ENCODE measurements at regions of chr13 and their contacts with region 1.

Region 1: DNA sequence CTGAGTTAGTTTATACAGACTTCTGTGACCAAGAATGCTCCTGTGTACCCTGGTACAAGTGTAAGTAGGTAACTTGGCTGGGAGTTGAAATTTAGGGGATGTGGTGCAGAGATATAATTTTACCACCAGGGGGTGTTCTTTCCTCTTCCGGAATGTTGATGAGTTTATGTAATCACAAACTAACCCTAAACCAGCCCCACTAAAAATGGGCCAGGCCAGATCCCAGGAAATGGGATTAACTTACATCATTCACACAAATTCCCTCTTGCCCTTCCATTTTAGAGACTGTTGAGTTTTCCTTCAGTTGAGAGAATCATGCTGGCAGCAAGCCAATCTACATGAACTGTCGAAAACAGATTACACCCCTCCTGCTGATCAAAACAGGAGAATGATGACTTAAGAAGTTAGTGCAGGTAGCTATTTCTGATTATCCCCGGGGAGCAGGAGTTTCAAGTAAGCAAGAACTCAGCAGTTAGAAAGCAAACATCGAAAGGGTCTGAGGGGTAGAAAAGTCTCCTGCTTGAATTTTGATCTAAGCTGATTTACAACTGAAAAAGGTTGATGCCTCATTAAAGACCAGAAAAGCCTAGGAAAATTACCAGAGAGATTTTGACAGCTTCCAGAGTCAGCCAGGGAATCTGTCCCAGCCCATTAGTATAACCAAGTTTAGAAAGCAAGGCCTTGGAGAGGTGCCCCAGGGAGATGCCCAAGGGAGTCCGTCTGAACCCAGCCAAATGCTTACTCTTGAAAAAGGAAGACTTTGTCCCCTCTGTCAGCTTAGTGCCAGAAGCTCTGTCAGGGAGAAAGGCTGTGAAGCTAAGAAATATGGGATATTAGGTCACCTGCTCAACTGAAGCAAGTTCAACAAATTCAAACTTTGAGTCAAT is 32.3 kb upstream of the MED4 start:
- DNase-seq: peak in 8 of 9 donors; percentile 20 to 84 (median 80)
- ATAC-seq: peak; percentile 96
- H3K4me3 ChIP-seq: no peak overlapping the region
- H3K4me3 Mint-ChIP-seq: peak overlapping the region in 9 of 10 donors; percentile 25 to 69 (median 52)
- H3K27ac ChIP-seq: peak overlapping the region; percentile 54
- H3K27ac Mint-ChIP-seq: peak overlapping the region in 8 of 9 donors; percentile 83 to 95 (median 89)
- H3K4me1 ChIP-seq: peaks cover 5 to 15% of the 10 kb centered on the region in 2 donors
- H3K4me1 Mint-ChIP-seq: peaks cover 14 to 42% (median 35%) of the 10 kb centered on the region in 7 donors
- H3K27me3 ChIP-seq: no peaks in the 10 kb centered on the region
- H3K27me3 Mint-ChIP-seq: peaks cover 0 to 3% (median 0%) of the 10 kb centered on the region in 5 donors

Region 2: GRCh38 chr13:48086272-48086671 is 40.9 kb before region 1 on chr13:
- CTCF ChIA-PET with region 1: no interaction called
- POLR2A ChIA-PET with region 1: no interaction called
- intact Hi-C with region 1: no loop called
- DNase-seq: no peak
- ATAC-seq: no peak
- H3K4me3 ChIP-seq: no peak overlapping the region
- H3K4me3 Mint-ChIP-seq: no peak overlapping the region
- H3K27ac ChIP-seq: no peak overlapping the region
- H3K27ac Mint-ChIP-seq: no peak overlapping the region
- H3K4me1 ChIP-seq: peaks cover 4 to 5% of the 10 kb centered on the region in 2 donors
- H3K4me1 Mint-ChIP-seq: peaks cover 3 to 26% (median 23%) of the 10 kb centered on the region in 7 donors
- H3K27me3 ChIP-seq: no peaks in the 10 kb centered on the region
- H3K27me3 Mint-ChIP-seq: no peaks in the 10 kb centered on the region

Region 3: GRCh38 chr13:48144413-48145035 is 17.3 kb after region 1 on chr13:
- CTCF ChIA-PET with region 1: interaction called, 4 read pairs
- POLR2A ChIA-PET with region 1: interaction called, 13 read pairs
- intact Hi-C with region 1: loop called in 1 of 2 experiments (anchors 1 kb)
- DNase-seq: peak in 4 of 9 donors; percentile 27 to 50 (median 30)
- ATAC-seq: peak; percentile 85
- H3K4me3 ChIP-seq: no peak overlapping the region
- H3K4me3 Mint-ChIP-seq: peak overlapping the region in 6 of 10 donors; percentile 9 to 56 (median 28)
- H3K27ac ChIP-seq: peak overlapping the region; percentile 52
- H3K27ac Mint-ChIP-seq: peak overlapping the region in 8 of 9 donors; percentile 56 to 97 (median 92)
- H3K4me1 ChIP-seq: peaks cover 5 to 9% of the 10 kb centered on the region in 2 donors
- H3K4me1 Mint-ChIP-seq: peaks cover 9 to 49% (median 36%) of the 10 kb centered on the region in 7 donors
- H3K27me3 ChIP-seq: no peaks in the 10 kb centered on the region
- H3K27me3 Mint-ChIP-seq: peaks cover 0 to 3% (median 0%) of the 10 kb centered on the region in 5 donors

Region 4: DNA sequence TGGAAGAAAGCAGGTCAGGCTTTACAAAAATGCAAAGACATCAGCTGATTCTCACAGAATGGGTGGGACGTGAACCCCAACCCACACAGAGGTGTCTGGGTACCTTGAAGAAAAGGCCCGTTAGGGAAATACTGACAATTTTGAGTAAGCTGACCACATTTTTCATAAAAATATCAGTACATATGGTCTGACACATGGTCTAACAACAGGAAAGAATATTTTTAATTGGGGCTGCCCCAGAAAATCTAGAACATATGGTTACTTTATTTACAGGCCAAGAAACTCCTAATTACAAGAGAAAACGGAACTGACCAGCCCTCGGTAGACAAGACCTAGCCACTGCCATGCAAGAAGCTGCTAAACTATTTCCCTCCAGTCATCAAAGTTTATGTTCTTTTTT is 57.1 kb after region 1 on chr13:
- CTCF ChIA-PET with region 1: interaction called, 10 read pairs
- POLR2A ChIA-PET with region 1: interaction called, 18 read pairs
- intact Hi-C with region 1: loop called (anchors 1 kb)
- DNase-seq: no peak
- ATAC-seq: no peak
- H3K4me3 ChIP-seq: no peak overlapping the region
- H3K4me3 Mint-ChIP-seq: peak overlapping the region in 9 of 10 donors; percentile 41 to 79 (median 65)
- H3K27ac ChIP-seq: peak overlapping the region; percentile 42
- H3K27ac Mint-ChIP-seq: peak overlapping the region in 8 of 9 donors; percentile 82 to 97 (median 90)
- H3K4me1 ChIP-seq: peaks cover 8 to 58% of the 10 kb centered on the region in 2 donors
- H3K4me1 Mint-ChIP-seq: peaks cover 40 to 81% (median 64%) of the 10 kb centered on the region in 7 donors
- H3K27me3 ChIP-seq: no peaks in the 10 kb centered on the region
- H3K27me3 Mint-ChIP-seq: peaks cover 0 to 10% (median 0%) of the 10 kb centered on the region in 5 donors

Region 5: DNA sequence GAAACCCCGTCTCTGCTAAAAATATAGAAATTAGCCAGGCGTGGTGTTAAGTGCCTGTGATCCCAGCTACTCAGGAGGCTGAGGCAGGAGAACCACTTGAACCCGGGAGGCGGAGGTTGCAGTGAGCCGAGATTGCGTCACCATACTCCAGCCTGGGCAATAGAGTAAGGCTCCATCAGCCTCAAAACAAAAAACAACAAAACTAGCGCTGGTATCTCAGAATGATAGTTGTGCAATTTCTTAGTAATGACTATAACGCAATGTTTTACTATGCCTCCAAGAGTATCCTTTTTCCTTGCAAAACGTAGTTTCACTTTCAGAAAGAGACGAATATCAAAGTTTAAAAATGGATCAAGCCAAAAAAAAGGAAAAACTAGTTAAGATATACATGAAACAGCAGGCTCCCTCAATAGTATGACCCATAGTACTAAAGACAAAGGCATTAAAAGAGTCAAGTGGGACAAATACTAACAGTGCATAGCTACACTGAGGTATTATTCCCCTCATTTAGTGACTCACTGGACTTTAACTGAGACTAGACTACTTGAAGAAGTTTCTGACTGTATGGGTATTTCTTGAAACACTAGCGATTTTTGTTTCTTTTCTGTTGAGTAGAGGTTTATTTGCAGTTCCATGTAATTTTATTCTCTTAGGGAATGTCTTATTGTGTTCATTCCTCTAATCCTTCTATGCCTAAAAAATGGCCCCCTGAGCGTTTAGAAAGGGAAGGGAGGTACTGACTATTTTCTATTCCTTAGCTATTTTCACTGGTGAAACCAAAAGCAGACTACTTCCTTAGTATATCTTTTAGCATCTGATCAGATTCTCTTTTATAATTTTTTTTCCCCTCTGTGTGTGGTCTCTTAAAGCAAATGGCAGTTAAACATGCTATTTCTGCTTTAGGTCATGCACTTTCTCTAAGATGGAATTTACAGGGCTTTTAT is 95.4 kb after region 1 on chr13:
- CTCF ChIA-PET with region 1: interaction called, 10 read pairs
- POLR2A ChIA-PET with region 1: interaction called, 19 read pairs
- intact Hi-C with region 1: loop called in 1 of 2 experiments (anchors 1 kb)
- DNase-seq: peak in 2 of 9 donors; percentile 25 to 30
- ATAC-seq: peak; percentile 58
- H3K4me3 ChIP-seq: peak overlapping the region; percentile 9
- H3K4me3 Mint-ChIP-seq: peak overlapping the region; percentile 48 to 91 (median 78)
- H3K27ac ChIP-seq: peak overlapping the region; percentile 83
- H3K27ac Mint-ChIP-seq: peak overlapping the region; percentile 38 to 99 (median 97)
- H3K4me1 ChIP-seq: peaks cover 40 to 60% of the 10 kb centered on the region in 2 donors
- H3K4me1 Mint-ChIP-seq: peaks cover 41 to 88% (median 74%) of the 10 kb centered on the region in 7 donors
- H3K27me3 ChIP-seq: no peaks in the 10 kb centered on the region
- H3K27me3 Mint-ChIP-seq: peaks cover 0 to 32% (median 0%) of the 10 kb centered on the region in 5 donors

Region 6: GRCh38 chr13:48334534-48335127 is 207.4 kb after region 1 on chr13:
- CTCF ChIA-PET with region 1: interaction called, 4 read pairs
- POLR2A ChIA-PET with region 1: interaction called, 3 read pairs
- intact Hi-C with region 1: loop called (anchors 1 to 5 kb)
- DNase-seq: peak in 6 of 9 donors; percentile 27 to 64 (median 48)
- ATAC-seq: peak; percentile 79
- H3K4me3 ChIP-seq: no peak overlapping the region
- H3K4me3 Mint-ChIP-seq: no peak overlapping the region
- H3K27ac ChIP-seq: no peak overlapping the region
- H3K27ac Mint-ChIP-seq: no peak overlapping the region
- H3K4me1 ChIP-seq: no peaks in the 10 kb centered on the region
- H3K4me1 Mint-ChIP-seq: peaks cover 0 to 23% (median 5%) of the 10 kb centered on the region in 7 donors
- H3K27me3 ChIP-seq: no peaks in the 10 kb centered on the region
- H3K27me3 Mint-ChIP-seq: no peaks in the 10 kb centered on the region

Region 7: DNA sequence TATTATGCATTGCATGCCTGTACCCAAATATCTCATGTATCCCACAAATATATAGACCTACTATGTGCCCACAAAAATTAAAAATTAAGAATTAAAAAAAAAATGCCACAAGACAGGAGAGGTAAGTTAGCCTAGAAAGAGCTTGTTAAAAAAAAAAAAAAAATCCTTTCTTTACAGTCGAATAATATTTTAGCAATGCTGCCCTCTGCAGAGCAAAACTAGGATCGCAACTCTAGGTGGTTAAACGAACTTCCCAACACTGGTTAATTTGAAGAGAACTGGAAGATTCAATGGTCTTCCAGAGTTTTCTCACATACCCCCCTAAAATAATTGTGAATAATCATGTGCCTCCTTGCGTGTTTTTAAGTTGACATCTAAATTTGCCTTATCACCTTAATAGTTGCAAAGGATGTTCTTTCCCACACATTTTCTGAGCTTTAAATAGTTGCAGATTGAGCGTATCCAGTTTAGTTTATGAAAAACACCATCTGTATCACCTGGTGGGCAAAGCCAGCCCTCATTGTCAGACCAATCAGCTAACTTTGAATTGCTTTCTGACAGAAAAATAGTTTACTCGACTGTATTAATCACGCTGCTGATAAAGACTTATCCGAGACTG is 453.1 kb after region 1 on chr13:
- CTCF ChIA-PET with region 1: interaction called, 5 read pairs
- POLR2A ChIA-PET with region 1: no interaction called
- intact Hi-C with region 1: loop called (anchors 1 kb)
- DNase-seq: peak; percentile 44 to 79 (median 61)
- ATAC-seq: peak; percentile 84
- H3K4me3 ChIP-seq: no peak overlapping the region
- H3K4me3 Mint-ChIP-seq: no peak overlapping the region
- H3K27ac ChIP-seq: no peak overlapping the region
- H3K27ac Mint-ChIP-seq: no peak overlapping the region
- H3K4me1 ChIP-seq: peaks cover 0 to 6% of the 10 kb centered on the region in 2 donors
- H3K4me1 Mint-ChIP-seq: peaks cover 0 to 25% (median 6%) of the 10 kb centered on the region in 7 donors
- H3K27me3 ChIP-seq: no peaks in the 10 kb centered on the region
- H3K27me3 Mint-ChIP-seq: peaks cover 0 to 68% (median 3%) of the 10 kb centered on the region in 5 donors

Measured in naive thymus-derived CD4-positive, alpha-beta T cell (primary cell).